ENCODE measurements at regions of chr13 and their contacts with region 1.

Region 1: GRCh38 chr13:51797664-51798488 is 6.1 kb downstream of the DHRS12 start:
- DNase-seq: peak; percentile 77
- H3K4me3 Mint-ChIP-seq: no peak overlapping the region
- H3K27ac Mint-ChIP-seq: no peak overlapping the region
- H3K4me1 Mint-ChIP-seq: peaks cover 37% of the 10 kb centered on the region
- H3K27me3 Mint-ChIP-seq: no peaks in the 10 kb centered on the region

Region 2: DNA sequence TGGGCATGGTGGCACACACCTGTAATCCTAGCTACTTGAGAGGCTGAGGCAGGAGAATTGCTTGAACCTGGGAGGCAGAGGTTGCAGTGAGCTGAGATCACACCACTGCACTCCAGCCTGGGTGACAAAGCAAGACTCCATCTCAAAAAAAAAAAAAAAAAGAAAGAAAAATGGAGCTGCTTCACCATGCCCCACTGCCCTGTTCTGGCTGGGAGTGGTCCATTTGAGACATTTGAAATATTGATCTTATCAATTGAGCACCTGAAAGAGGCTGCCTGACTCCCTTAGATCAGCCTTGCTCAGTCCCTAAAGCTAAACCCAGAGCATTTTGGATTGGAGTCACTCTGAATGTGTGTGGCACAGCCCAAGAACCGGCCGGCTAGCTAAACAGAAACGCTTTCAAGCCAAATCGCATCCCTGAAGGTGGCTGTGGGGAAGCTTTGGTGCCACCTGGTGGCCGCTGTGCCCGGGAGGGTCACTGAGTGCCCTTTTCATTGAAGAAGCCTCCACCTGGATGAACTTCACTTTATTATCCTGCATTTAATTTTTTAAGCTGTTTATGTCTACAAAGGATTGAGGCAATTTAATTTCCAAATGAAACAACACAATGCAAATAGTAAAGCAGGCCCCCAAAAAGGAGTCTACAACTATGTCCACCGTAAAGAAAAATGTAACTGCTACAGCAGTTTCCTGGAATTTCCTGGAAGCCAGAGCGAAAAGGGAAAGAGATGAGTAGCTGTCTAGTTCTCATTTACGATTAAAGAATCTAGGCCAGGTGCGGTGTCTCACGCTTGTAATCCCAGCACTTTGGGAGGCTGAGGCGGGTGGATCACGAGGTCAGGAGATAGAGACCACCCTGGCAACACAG is 511.5 kb before region 1 on chr13:
- CTCF ChIA-PET with region 1: interaction called, 65 read pairs
- DNase-seq: peak; percentile 83
- H3K4me3 Mint-ChIP-seq: no peak overlapping the region
- H3K27ac Mint-ChIP-seq: no peak overlapping the region
- H3K4me1 Mint-ChIP-seq: peaks cover 22% of the 10 kb centered on the region
- H3K27me3 Mint-ChIP-seq: peaks cover 12% of the 10 kb centered on the region

Region 3: DNA sequence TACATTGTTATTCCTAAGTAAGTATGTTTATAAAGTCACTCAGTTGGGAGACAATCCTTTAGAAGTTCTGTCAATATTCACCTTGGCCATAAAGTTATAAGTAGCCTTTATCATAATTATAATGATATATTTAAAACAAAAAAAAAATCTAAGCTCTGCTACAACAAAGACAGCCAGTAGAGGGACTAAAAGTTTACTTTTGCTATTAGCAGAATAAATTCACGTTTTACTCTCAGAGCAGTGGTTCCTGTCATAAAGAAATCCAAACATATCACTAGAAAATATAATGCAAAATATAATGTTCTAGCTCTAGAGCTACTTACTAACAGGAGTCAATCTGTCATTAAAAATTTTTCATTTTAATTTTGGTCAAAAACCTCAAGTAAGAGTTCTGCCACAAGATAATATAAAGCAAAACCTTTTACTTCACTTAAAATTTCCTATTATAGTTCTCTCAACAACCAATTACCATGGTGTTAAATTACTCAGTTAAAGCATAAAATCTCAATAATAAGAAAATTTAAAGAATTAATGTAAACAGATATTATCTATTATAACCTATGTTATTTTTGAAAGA is 362.8 kb before region 1 on chr13:
- CTCF ChIA-PET with region 1: interaction called, 24 read pairs
- DNase-seq: no peak
- H3K4me3 Mint-ChIP-seq: no peak overlapping the region
- H3K27ac Mint-ChIP-seq: no peak overlapping the region
- H3K4me1 Mint-ChIP-seq: peaks cover 5% of the 10 kb centered on the region
- H3K27me3 Mint-ChIP-seq: no peaks in the 10 kb centered on the region

Region 4: GRCh38 chr13:51452361-51453206 is 345.3 kb before region 1 on chr13 and contains the start of gene INTS6:
- CTCF ChIA-PET with region 1: interaction called, 20 read pairs
- DNase-seq: peak; percentile 98
- H3K4me3 Mint-ChIP-seq: peak within 1 kb of the TSS; percentile 86
- H3K27ac Mint-ChIP-seq: peak within 1 kb of the TSS; percentile 96
- H3K4me1 Mint-ChIP-seq: peaks cover 37% of the 10 kb centered on the region
- H3K27me3 Mint-ChIP-seq: peaks cover 4% of the 10 kb centered on the region

Region 5: GRCh38 chr13:51502153-51502651 is 295.7 kb before region 1 on chr13:
- CTCF ChIA-PET with region 1: no interaction called
- DNase-seq: no peak
- H3K4me3 Mint-ChIP-seq: no peak overlapping the region
- H3K27ac Mint-ChIP-seq: no peak overlapping the region
- H3K4me1 Mint-ChIP-seq: peaks cover 11% of the 10 kb centered on the region
- H3K27me3 Mint-ChIP-seq: peaks cover 4% of the 10 kb centered on the region

Region 6: GRCh38 chr13:51534041-51534817 is 263.6 kb before region 1 on chr13:
- CTCF ChIA-PET with region 1: no interaction called
- DNase-seq: peak; percentile 69
- H3K4me3 Mint-ChIP-seq: peak overlapping the region; percentile 10
- H3K27ac Mint-ChIP-seq: peak overlapping the region; percentile 74
- H3K4me1 Mint-ChIP-seq: peaks cover 46% of the 10 kb centered on the region
- H3K27me3 Mint-ChIP-seq: no peaks in the 10 kb centered on the region

Region 7: DNA sequence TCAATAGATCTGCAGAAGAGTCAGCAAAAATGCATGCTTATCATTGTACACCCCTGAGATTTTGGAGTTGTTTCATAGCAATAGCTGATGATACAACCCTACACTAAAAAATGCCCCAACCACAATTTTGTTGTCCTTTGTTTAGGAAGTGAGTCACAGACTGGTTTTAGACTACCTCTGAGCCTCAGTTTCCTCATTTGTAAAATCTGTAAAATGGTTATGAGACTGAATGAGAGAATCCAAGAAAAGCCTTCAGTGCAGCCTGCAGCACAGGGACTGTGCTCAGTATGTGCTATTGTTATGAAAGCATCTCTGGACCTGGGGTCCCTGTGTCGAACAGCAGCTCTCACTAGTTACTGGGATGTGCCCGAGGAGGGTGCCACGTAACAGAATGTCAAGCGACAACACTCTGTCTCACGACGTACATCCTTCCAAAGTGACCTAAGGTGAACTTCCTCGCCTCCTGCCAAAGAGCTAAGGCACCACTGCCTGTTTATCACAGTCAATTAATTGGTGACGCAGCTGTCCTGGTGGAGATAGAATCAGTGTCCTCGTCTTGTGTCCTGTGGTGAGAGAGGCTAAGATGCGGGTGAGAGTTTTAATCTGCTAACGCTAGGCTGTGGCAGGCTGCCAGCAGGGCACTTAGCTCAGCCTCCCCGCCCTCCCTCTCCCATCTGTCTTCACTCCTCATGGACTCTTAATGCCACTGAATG is 12.0 kb before region 1 on chr13:
- CTCF ChIA-PET with region 1: interaction called, 19 read pairs
- DNase-seq: no peak
- H3K4me3 Mint-ChIP-seq: no peak overlapping the region
- H3K27ac Mint-ChIP-seq: no peak overlapping the region
- H3K4me1 Mint-ChIP-seq: peaks cover 3% of the 10 kb centered on the region
- H3K27me3 Mint-ChIP-seq: no peaks in the 10 kb centered on the region

Region 8: DNA sequence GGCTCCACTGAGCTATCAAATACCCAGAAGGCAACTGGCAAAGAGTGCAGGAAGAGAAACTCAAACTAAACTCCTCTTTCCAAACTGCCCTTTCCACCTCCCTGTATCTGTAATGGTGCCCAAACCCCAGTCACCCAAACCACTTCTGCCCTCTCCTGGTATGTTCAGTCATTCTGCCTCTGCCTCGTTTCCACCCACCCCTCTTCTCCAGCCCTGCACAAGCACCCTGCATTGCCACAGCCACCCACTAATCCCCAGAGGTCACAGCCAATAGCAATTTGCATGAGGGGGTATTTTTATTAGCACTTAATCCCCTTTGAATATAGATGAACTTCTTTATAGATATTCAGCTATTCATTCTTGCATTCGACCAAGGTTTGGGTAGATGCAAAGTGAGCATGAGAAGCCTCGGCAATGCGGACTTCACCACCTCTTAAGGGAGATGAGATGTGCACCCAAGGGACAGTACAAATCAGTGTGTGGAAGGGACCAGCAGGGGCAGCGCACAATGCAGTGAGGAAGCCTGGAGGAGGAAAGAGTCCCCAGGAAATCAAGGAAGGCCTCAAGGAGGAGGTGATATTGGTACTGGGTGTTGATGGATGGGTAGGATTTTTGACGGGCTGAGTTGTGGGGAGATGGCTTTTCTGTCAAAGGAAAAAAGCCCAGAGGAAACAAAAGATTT is 34.7 kb after region 1 on chr13:
- CTCF ChIA-PET with region 1: interaction called, 14 read pairs
- DNase-seq: peak; percentile 75
- H3K4me3 Mint-ChIP-seq: no peak overlapping the region
- H3K27ac Mint-ChIP-seq: peak overlapping the region; percentile 24
- H3K4me1 Mint-ChIP-seq: peaks cover 76% of the 10 kb centered on the region
- H3K27me3 Mint-ChIP-seq: peaks cover 19% of the 10 kb centered on the region

Measured in activated naive CD4-positive, alpha-beta T cell treated with anti-CD3 and anti-CD28 coated beads, Interleukin-2, amount 10 ng/mL, durations not matched to agents 7 days and 5 days (primary cell).